ENCODE measurements at regions of chr9 and their contacts with region 1.

Region 1: DNA sequence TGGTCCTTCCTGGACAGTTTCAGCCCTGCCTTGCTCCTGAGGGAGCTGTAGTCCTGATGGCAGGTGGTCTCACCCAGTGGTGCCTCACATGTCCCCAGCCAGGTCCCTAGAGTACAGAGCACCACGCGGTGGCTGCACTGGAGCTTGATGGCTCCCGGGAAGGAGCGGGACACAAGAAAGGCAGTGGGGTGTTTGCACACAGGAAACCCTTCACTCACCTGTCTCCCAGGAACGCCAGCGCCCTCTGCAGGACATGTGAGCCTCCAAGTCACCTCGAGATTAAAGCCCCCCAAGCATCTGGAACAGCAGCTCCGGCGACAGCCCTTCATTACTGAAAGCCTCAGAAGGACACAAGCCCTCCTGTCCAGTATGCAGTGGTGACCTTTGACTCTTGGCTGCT is 19.9 kb upstream of the TMEM250 start:
- DNase-seq: no peak
- H3K4me3 ChIP-seq: no peak overlapping the region
- H3K27ac ChIP-seq: no peak overlapping the region
- H3K4me1 ChIP-seq: peaks cover 14% of the 10 kb centered on the region
- H3K27me3 ChIP-seq: peaks cover 6% of the 10 kb centered on the region
- CTCF ChIP-seq: peak; percentile 26 to 48

Region 2: GRCh38 chr9:134826336-134827285 is 1312.0 kb before region 1 on chr9:
- CTCF ChIA-PET with region 1: no interaction called
- dilution Hi-C with region 1: no loop called
- in situ Hi-C with region 1: no loop called
- intact Hi-C with region 1: no loop called
- DNase-seq: peak; percentile 84
- H3K4me3 ChIP-seq: no peak overlapping the region
- H3K27ac ChIP-seq: no peak overlapping the region
- H3K4me1 ChIP-seq: no peaks in the 10 kb centered on the region
- H3K27me3 ChIP-seq: no peaks in the 10 kb centered on the region
- CTCF ChIP-seq: no peak

Region 3: GRCh38 chr9:136079211-136079915 is 59.2 kb before region 1 on chr9:
- CTCF ChIA-PET with region 1: no interaction called
- dilution Hi-C with region 1: loop called (anchors 5 kb)
- in situ Hi-C with region 1: no loop called
- intact Hi-C with region 1: no loop called
- DNase-seq: no peak
- H3K4me3 ChIP-seq: no peak overlapping the region
- H3K27ac ChIP-seq: no peak overlapping the region
- H3K4me1 ChIP-seq: peaks cover 11% of the 10 kb centered on the region
- H3K27me3 ChIP-seq: no peaks in the 10 kb centered on the region
- CTCF ChIP-seq: no peak

Region 4: GRCh38 chr9:136283291-136284235 is 145.0 kb after region 1 on chr9:
- CTCF ChIA-PET with region 1: no interaction called
- dilution Hi-C with region 1: no loop called
- in situ Hi-C with region 1: no loop called
- intact Hi-C with region 1: loop called (anchors 2 kb)
- DNase-seq: peak; percentile 48
- H3K4me3 ChIP-seq: peak overlapping the region in 1 of 3 experiments; percentile 9
- H3K27ac ChIP-seq: no peak overlapping the region
- H3K4me1 ChIP-seq: peaks cover 6% of the 10 kb centered on the region
- H3K27me3 ChIP-seq: no peaks in the 10 kb centered on the region
- CTCF ChIP-seq: peak; percentile 86 to 88

Region 5: DNA sequence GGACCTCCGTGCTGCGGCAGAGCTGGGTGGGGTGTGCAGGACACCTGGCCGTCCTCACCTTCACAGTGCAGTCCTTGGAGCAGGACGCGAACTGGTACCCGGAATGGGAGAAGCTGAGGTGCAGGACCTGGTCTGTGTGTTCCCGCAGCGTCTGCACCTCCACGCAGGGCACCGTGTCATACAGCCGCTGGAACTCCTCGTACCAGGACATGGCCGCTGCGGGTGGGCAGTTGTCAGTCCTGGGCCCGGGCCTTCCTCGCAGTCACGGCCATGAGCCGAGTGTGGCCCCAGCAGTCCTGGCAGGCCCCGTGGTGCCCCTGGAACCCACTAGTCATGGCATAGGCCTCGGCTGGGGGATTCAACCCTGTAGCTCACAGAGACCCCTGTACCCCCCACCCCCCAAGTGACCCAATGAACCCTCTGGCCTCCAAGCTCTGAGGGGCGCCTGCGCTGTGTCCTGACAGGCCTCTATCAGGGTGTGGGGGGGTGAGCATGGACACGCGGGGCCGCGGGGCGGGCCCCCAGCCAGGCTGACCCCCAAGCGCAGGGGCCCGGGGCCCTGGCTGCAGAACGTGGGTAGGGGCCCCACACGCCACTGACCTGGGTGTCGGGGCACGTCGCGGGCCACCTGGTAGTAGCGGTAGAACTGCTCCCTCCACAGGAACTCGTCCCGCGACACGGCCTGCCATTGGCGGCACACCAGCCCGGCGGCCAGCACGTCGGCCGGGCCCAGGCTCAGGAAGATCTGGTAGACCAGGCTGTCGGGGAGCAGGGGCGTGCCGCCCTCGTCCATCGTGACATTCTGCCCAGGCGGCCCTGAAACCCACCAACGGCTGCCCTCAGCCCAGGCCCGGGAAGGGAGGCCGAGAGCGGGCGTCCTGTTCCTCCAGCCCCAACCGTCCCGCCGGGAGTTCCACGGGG is 805.0 kb after region 1 on chr9:
- CTCF ChIA-PET with region 1: no interaction called
- dilution Hi-C with region 1: no loop called
- in situ Hi-C with region 1: no loop called
- intact Hi-C with region 1: no loop called
- DNase-seq: peak; percentile 43
- H3K4me3 ChIP-seq: peak overlapping the region; percentile 68 to 83 (median 77)
- H3K27ac ChIP-seq: peak overlapping the region; percentile 59
- H3K4me1 ChIP-seq: peaks cover 11% of the 10 kb centered on the region
- H3K27me3 ChIP-seq: no peaks in the 10 kb centered on the region
- CTCF ChIP-seq: no peak

Measured in mammary epithelial cell (primary cell).